ENCODE measurements at regions of chr5 and their contacts with region 1.

Region 1: DNA sequence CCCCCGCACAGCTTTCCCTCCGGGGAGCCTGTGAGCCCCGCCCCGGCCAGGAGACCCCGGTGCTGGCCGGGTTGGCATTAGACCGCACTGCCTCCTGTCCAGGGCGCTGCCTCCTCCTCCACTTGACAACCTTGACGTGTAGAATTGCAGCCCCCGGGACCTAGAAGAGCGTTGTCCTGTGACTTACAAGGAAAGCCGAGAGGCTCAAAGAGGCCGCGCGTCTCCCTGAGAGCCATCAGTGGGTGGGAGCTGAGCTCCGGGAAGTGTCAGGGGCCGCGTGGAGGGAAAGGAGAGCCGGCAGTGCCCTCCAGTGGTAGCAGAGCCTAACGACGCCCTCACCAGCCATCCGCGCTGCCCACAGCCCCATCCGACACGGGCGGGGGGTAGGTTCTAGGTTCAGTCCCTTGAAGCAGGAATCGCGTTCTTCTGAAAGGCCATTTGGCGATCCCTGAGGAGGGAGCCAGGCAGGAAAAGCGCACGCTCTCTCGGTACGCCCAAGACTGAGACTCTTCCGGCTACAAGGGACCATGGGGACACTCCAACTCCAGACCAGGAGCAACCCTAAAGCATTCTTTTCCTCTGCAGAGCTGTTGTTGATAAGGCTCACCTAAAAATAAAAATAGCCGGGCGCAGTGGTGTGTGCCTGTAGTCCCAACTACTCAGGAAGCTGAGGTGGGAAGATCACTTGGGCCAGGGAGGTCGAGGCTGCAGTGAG is 40.6 kb upstream of the SAP30L start:
- DNase-seq: peak; percentile 80
- ATAC-seq: peak; percentile 83
- H3K4me3 ChIP-seq: peak overlapping the region; percentile 61
- H3K27ac ChIP-seq: peak overlapping the region; percentile 54
- H3K4me1 ChIP-seq: peaks cover 23% of the 10 kb centered on the region
- H3K27me3 ChIP-seq: no peaks in the 10 kb centered on the region
- CTCF ChIP-seq: peak; percentile 74

Region 2: DNA sequence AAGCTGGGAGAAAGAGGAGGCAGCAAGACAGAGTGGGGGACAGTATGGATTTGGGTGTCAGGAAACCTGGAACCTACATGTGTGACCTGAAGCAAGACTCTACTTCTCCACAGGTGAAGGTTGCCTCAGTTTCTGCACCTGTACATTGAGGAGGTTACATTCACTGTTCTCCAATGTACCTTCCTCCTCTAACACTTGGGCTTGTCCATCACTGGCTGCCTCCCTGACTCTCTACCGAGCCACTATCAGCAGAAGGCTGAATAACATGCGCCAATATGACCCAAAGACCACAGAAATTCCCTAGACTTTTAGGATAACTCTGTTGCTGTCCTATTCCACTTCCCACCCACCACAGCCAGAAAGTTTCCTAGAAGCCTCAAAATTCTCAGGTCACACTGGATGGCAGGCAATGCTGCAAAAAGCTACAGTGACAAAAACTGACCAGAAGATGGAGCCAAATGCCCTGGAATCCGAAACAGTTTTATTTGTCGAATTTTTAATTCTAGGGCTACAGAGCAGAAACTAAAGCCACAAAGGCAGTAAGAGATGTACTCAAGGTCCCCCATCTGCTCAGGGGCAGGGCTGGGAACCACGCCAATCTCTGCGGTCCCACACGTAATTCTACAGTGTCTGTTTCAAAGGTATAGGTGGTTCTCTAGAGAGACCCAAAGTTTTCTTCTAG is 431.0 kb before region 1 on chr5:
- CTCF ChIA-PET with region 1: interaction called, 4 read pairs
- POLR2A ChIA-PET with region 1: no interaction called
- intact Hi-C with region 1: loop called (anchors 1 kb)
- DNase-seq: peak; percentile 69
- ATAC-seq: peak; percentile 59
- H3K4me3 ChIP-seq: no peak overlapping the region
- H3K27ac ChIP-seq: no peak overlapping the region
- H3K4me1 ChIP-seq: no peaks in the 10 kb centered on the region
- H3K27me3 ChIP-seq: peaks cover 16% of the 10 kb centered on the region
- CTCF ChIP-seq: peak; percentile 78

Region 3: DNA sequence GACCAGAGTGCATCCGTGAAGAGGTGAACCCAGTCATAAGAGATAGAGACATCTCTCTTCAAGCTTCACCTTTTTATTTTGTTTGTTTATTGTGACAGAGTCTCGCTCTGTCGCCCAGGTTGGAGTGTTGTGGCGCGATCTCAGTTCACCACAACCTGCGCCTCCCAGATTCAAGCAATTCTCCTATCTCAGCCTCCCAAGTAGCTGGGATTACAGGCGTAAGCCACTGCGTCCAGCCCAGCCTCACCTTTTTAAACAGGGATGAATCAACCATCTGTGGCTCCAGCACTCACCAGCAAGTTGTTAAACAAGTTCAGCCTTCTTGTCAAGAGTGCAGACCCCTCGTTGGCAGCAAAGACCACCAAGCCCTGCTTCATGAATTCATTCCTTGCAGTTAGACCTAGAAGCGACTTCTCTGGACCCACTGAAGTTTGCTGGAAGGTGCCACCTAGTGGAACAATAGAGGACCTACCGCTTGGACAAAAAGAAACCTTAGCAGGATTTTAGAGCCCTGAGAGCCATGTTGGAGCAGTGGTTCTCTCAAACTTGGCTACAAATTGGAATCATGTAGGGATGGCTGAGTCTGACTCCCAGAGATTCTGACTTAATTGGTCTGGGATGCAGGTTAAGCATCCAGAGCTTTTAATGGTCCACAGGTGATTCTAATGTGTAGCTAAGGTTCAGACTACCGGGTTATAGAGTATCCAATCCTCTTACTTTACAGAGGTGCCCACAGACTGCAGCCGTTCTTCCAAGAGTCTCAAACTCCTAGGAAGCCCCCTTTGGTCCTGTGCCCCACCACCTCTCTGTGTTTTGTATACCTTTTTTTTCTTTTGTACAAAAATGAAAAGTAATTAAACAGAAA is 225.2 kb before region 1 on chr5:
- CTCF ChIA-PET with region 1: interaction called, 11 read pairs
- POLR2A ChIA-PET with region 1: no interaction called
- intact Hi-C with region 1: loop called (anchors 1 kb)
- DNase-seq: peak; percentile 71
- ATAC-seq: peak; percentile 64
- H3K4me3 ChIP-seq: no peak overlapping the region
- H3K27ac ChIP-seq: no peak overlapping the region
- H3K4me1 ChIP-seq: peaks cover 22% of the 10 kb centered on the region
- H3K27me3 ChIP-seq: no peaks in the 10 kb centered on the region
- CTCF ChIP-seq: peak; percentile 78

Region 4: GRCh38 chr5:154287136-154287535 is 118.1 kb before region 1 on chr5:
- CTCF ChIA-PET with region 1: no interaction called
- POLR2A ChIA-PET with region 1: no interaction called
- intact Hi-C with region 1: loop called (anchors 2 kb)
- DNase-seq: peak; percentile 89
- ATAC-seq: peak; percentile 72
- H3K4me3 ChIP-seq: peak overlapping the region; percentile 62
- H3K27ac ChIP-seq: peak overlapping the region; percentile 80
- H3K4me1 ChIP-seq: peaks cover 54% of the 10 kb centered on the region
- H3K27me3 ChIP-seq: no peaks in the 10 kb centered on the region
- CTCF ChIP-seq: no peak

Region 5: GRCh38 chr5:154368041-154368800 is 37.0 kb before region 1 on chr5:
- CTCF ChIA-PET with region 1: interaction called, 3 read pairs
- POLR2A ChIA-PET with region 1: no interaction called
- intact Hi-C with region 1: loop called (anchors 1 kb)
- DNase-seq: peak; percentile 95
- ATAC-seq: peak; percentile 88
- H3K4me3 ChIP-seq: peak overlapping the region; percentile 6; the same call in 1 of the 2 replicates
- H3K27ac ChIP-seq: peak overlapping the region; percentile 96
- H3K4me1 ChIP-seq: peaks cover 60% of the 10 kb centered on the region
- H3K27me3 ChIP-seq: no peaks in the 10 kb centered on the region
- CTCF ChIP-seq: no peak

Region 6: DNA sequence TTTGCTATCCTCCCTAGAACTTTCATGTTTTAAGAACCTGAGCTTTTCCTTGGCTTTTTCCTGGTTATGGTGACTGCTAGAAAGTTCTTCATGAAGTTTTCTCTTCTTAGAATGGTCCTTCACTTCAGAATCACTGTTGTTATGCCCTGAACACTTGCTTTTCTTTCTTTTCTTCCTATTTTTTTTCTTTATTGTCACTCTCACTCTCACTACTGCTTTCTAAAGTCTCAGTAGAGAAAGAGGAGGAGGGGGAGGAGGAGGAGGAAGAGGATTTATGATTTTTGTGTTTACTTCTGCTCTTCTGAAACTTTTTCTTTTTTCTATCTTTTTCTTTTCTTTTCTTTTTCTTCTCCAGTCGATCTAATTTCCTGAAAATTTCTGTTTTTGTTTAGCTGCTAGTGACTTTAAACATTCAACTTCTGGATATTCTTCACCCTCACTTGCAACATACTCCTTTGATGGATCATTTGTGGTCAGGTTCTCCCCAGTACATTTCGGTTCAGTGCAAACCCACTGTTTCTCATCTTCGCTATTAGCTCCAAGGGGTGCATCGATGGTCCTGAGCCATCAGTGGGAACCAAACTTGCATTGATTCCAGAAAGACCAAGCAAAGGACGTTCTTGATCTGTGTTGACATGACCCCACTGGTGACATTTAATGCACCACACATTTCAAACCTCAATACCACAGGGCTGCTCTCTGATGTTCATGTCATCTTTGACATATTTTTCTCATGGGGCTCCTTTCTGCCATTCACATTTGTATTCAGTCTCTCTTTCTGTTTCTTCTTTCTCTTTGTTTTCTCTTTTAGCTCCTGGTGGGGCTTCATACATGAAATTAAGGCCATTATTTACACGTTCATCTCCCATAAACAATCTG is 154.4 kb after region 1 on chr5:
- CTCF ChIA-PET with region 1: no interaction called
- POLR2A ChIA-PET with region 1: no interaction called
- intact Hi-C with region 1: no loop called
- DNase-seq: no peak
- ATAC-seq: no peak
- H3K4me3 ChIP-seq: no peak overlapping the region
- H3K27ac ChIP-seq: no peak overlapping the region
- H3K4me1 ChIP-seq: no peaks in the 10 kb centered on the region
- H3K27me3 ChIP-seq: 0 out of 2 replicates have a peak, but pooled peaks cover 5% of the 10 kb centered on the region
- CTCF ChIP-seq: no peak